ENCODE measurements at regions of chr5 and their contacts with region 1.

Region 1: DNA sequence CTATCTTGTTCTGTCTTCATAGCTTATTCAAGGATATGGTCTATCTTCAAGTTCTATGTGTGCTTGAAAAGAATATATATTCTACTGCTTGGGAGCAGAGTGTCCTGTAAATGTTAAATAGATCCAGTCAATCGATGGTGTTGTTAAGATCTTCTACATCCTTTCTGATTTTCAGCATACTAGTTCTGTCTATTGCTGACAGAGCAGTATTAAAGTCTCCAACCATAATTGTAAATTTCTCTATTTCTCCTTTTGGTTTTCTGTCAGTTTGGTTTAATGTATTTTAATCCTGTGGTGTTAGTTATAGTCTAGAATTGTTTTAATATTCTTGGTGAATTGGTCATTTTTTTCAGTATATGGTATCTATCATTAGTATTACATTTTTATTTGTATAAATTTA is 124.0 kb upstream of the COX7C start:
- DNase-seq: no peak
- H3K4me3 ChIP-seq: no peak overlapping the region
- H3K27ac ChIP-seq: no peak overlapping the region
- H3K4me1 ChIP-seq: no peaks in the 10 kb centered on the region
- H3K27me3 ChIP-seq: no peaks in the 10 kb centered on the region
- CTCF ChIP-seq: no peak
- POLR2A ChIP-seq: no peak

Region 2: GRCh38 chr5:85484982-85485574 is 1008.7 kb before region 1 on chr5:
- intact Hi-C with region 1: no loop called
- DNase-seq: no peak
- H3K4me3 ChIP-seq: no peak overlapping the region
- H3K27ac ChIP-seq: no peak overlapping the region
- H3K4me1 ChIP-seq: no peaks in the 10 kb centered on the region
- H3K27me3 ChIP-seq: no peaks in the 10 kb centered on the region
- CTCF ChIP-seq: no peak
- POLR2A ChIP-seq: no peak

Region 3: GRCh38 chr5:86507574-86507973 is 13.8 kb after region 1 on chr5:
- intact Hi-C with region 1: no loop called
- DNase-seq: no peak
- H3K4me3 ChIP-seq: no peak overlapping the region
- H3K27ac ChIP-seq: no peak overlapping the region
- H3K4me1 ChIP-seq: no peaks in the 10 kb centered on the region
- H3K27me3 ChIP-seq: no peaks in the 10 kb centered on the region
- CTCF ChIP-seq: no peak
- POLR2A ChIP-seq: no peak

Region 4: GRCh38 chr5:86780030-86780429 is 286.3 kb after region 1 on chr5:
- intact Hi-C with region 1: loop called (anchors 5 kb)
- DNase-seq: no peak
- H3K4me3 ChIP-seq: no peak overlapping the region
- H3K27ac ChIP-seq: no peak overlapping the region
- H3K4me1 ChIP-seq: no peaks in the 10 kb centered on the region
- H3K27me3 ChIP-seq: no peaks in the 10 kb centered on the region
- CTCF ChIP-seq: no peak
- POLR2A ChIP-seq: no peak